T-cell (primary cell): ENCODE measurements at regions of chr4 and their contacts with region 1.

Region 1: DNA sequence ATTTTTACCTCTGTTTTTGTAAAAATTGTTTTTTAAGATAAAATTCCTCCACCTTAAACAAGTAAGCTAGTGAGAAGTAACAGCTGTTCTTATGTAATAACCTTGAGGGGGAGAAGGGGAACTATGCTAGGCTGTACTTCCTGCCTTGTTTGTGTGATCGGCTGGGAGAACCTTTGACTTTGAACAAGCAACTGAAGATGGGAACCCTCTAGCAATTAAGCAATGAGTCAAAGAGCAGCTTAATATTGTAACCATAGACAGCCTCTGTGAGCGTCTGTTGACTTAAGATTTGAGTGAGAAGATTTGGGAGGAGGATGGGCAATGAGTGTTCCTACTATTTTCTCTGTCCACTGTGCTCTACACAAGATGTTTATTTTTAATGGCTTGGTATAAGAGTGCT is 135.1 kb downstream of the SCLT1 start:
- DNase-seq: peak in 2 of 35 experiments; percentile 2 to 8
- ATAC-seq: peak in 2 of 4 experiments; percentile 40 to 56
- H3K4me3 ChIP-seq: no peak overlapping the region
- H3K4me3 Mint-ChIP-seq: no peak overlapping the region
- H3K27ac ChIP-seq: no peak overlapping the region
- H3K27ac Mint-ChIP-seq: no peak overlapping the region
- H3K4me1 ChIP-seq: peaks cover 0 to 9% of the 10 kb centered on the region in 2 experiments
- H3K4me1 Mint-ChIP-seq: peaks cover 18 to 29% (median 19%) of the 10 kb centered on the region in 3 donors
- H3K27me3 ChIP-seq: no peaks in the 10 kb centered on the region
- H3K27me3 Mint-ChIP-seq: no peaks in the 10 kb centered on the region

Region 2: DNA sequence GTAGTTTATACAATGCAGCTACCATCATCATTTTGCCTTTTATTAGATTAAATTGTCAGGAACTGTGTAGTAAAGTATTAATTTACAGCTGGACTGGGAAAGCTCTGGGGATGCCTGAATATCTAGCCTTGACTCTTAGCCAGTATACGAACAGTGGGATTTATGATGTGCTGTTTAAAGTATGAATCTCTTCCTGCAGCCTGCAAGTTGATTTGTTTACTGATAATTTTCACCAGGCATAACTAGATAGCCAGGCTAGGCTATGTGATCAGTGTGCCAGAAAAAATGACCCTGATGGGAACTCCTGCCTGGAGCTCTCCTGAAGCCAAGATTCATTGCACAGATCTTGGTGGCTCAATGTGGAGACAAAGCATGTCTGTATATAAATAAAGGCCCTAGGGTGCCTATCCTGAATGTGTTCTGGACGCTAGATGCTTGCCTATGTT is 16.0 kb after region 1 on chr4:
- CTCF ChIA-PET with region 1: no interaction called
- POLR2A ChIA-PET with region 1: interaction called in 1 of 2 experiments, 10 read pairs
- DNase-seq: no peak
- ATAC-seq: no peak
- H3K4me3 ChIP-seq: no peak overlapping the region
- H3K4me3 Mint-ChIP-seq: no peak overlapping the region
- H3K27ac ChIP-seq: no peak overlapping the region
- H3K27ac Mint-ChIP-seq: no peak overlapping the region
- H3K4me1 ChIP-seq: no peaks in the 10 kb centered on the region
- H3K4me1 Mint-ChIP-seq: no peaks in the 10 kb centered on the region
- H3K27me3 ChIP-seq: no peaks in the 10 kb centered on the region
- H3K27me3 Mint-ChIP-seq: no peaks in the 10 kb centered on the region

Region 3: DNA sequence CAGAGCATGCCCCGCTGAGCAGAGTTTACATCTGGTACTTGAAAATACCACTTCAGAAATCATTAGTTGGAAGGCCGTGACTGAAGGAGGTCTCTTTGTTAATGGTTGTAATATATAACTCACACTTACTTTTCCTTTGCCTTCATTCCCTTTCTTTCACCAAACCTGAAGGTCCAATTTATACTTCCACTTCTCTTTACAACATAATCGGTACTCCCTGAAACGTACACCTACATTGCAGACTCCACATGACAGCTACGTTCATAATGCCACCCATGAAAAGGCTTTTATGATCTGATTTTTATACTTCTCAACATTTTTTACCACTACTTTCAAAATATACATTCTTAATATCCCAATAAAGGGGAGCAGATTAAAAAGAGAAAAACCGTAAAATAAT is 436.4 kb after region 1 on chr4:
- CTCF ChIA-PET with region 1: no interaction called
- POLR2A ChIA-PET with region 1: interaction called in 1 of 2 experiments, 10 read pairs
- DNase-seq: no peak
- ATAC-seq: no peak
- H3K4me3 ChIP-seq: no peak overlapping the region
- H3K4me3 Mint-ChIP-seq: no peak overlapping the region
- H3K27ac ChIP-seq: no peak overlapping the region
- H3K27ac Mint-ChIP-seq: no peak overlapping the region
- H3K4me1 ChIP-seq: no peaks in the 10 kb centered on the region
- H3K4me1 Mint-ChIP-seq: no peaks in the 10 kb centered on the region
- H3K27me3 ChIP-seq: peaks cover 0 to 7% of the 10 kb centered on the region in 2 experiments
- H3K27me3 Mint-ChIP-seq: peaks cover 0 to 8% of the 10 kb centered on the region in 2 donors

Region 4: GRCh38 chr4:129446074-129446473 is 487.9 kb after region 1 on chr4:
- CTCF ChIA-PET with region 1: no interaction called
- POLR2A ChIA-PET with region 1: interaction called in 1 of 2 experiments, 11 read pairs
- DNase-seq: no peak
- ATAC-seq: no peak
- H3K4me3 ChIP-seq: no peak overlapping the region
- H3K4me3 Mint-ChIP-seq: no peak overlapping the region
- H3K27ac ChIP-seq: no peak overlapping the region
- H3K27ac Mint-ChIP-seq: no peak overlapping the region
- H3K4me1 ChIP-seq: no peaks in the 10 kb centered on the region
- H3K4me1 Mint-ChIP-seq: no peaks in the 10 kb centered on the region
- H3K27me3 ChIP-seq: peaks cover 0 to 7% of the 10 kb centered on the region in 2 experiments
- H3K27me3 Mint-ChIP-seq: peaks cover 3 to 4% of the 10 kb centered on the region in 2 donors